Colonic mucosa (tissue), 4 donors: ENCODE measurements at regions of chr16 and their contacts with region 1.

Region 1: DNA sequence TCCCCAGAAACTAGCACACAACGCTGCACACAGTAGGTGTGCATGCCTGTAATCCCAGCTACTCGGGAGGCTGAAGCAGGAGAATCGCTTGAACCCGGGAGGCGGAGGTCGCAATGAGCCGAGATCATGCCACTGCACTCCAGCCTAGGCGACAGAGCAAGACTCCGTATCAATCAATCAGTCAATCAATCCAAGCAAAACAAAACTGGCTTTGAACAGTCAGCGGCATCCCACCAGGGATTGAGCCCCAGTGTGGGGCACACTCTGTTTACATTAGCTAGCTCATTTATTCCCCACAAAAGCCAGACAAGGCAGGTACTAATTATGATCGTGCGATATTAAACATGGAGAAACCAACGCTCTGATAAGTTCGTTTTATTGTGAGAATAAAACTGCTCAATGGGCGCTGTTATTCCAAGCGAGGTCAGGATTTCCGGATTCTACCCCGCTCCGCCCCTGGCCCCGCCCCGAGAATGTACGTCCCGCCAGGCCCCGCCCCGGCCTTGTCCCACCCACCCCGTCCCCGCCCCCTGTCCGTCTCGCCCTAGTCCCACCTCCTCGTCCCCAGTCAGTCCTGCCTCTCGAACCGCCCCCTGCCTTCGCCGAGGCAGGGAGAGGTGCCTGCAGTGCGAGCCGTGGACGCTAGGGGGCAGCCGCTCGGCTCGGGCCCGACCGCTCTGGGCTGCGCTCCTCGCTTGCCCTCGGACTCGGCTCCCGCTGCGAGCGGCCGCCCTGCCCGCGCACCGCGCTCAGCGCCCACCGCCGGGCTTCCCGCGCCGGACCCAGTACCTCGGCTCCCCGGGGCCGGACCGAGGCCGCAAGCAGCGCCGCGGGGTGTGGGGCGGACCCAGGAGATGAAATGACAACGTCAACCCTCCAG is at the start of gene VPS4A:
- DNase-seq: peak; percentile 97
- H3K4me3 ChIP-seq: peak within 1 kb of the TSS; percentile 96
- H3K27ac ChIP-seq: peak within 1 kb of the TSS; percentile 90
- H3K4me1 ChIP-seq: peaks cover 5% of the 10 kb centered on the region
- H3K27me3 ChIP-seq: no peaks in the 10 kb centered on the region
- CTCF ChIP-seq: peak; percentile 84
- total RNA-seq, gene VPS4A: 32.0 to 33.6 TPM

Region 2: GRCh38 chr16:69371564-69371963 is 60.7 kb after region 1 on chr16:
- intact Hi-C with region 1: loop called (anchors 10 kb)
- DNase-seq: no peak
- H3K4me3 ChIP-seq: no peak overlapping the region
- H3K27ac ChIP-seq: no peak overlapping the region
- H3K4me1 ChIP-seq: no peaks in the 10 kb centered on the region
- H3K27me3 ChIP-seq: no peaks in the 10 kb centered on the region
- CTCF ChIP-seq: no peak